ENCODE measurements at regions of chr3 and their contacts with region 1.

Region 1: DNA sequence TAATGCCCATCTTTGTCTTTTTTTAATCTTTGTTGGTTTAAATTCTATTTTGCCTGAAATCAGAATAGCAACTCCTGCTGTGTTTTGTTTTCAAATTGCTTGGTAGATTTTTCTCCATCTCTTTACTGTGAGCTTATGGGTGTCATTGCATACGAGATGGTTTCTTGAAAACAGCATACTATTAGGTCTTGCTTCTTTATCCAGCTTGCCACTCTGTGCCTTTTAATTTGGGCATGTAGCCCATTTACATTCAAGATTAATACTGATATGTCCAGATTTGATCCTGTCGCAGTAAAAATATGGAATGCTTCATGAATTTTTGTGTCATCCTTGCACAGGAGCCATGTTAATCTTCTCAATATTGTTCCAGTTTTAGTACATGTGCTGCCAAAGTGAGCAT is 316.6 kb downstream of the CGGBP1 start:
- DNase-seq: no peak
- H3K4me3 Mint-ChIP-seq: no peak overlapping the region
- H3K27ac Mint-ChIP-seq: no peak overlapping the region
- H3K4me1 Mint-ChIP-seq: peaks cover 31% of the 10 kb centered on the region
- H3K27me3 Mint-ChIP-seq: no peaks in the 10 kb centered on the region
- CTCF ChIP-seq: no peak

Region 2: DNA sequence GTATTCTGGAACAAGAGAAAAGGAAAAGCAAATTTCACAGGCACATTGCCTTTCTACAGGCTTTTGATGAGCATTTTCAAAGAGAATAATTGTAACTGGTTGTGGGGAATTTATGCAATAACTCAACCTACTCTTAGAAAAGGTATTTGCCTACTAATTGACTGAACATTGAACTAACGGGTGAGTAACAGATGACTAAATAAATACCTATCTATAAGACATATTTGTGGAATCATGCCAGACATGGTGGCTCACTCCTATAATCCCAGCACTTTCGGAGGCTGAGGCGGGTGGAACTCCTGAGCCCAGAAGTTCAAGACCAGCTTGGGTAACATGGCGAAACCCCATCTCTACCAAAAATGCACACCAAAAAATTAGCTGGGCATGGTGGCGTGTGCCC is 51.1 kb before region 1 on chr3:
- CTCF ChIA-PET with region 1: no interaction called
- intact Hi-C with region 1: no loop called
- DNase-seq: no peak
- H3K4me3 Mint-ChIP-seq: no peak overlapping the region
- H3K27ac Mint-ChIP-seq: no peak overlapping the region
- H3K4me1 Mint-ChIP-seq: no peaks in the 10 kb centered on the region
- H3K27me3 Mint-ChIP-seq: no peaks in the 10 kb centered on the region
- CTCF ChIP-seq: no peak

Region 3: DNA sequence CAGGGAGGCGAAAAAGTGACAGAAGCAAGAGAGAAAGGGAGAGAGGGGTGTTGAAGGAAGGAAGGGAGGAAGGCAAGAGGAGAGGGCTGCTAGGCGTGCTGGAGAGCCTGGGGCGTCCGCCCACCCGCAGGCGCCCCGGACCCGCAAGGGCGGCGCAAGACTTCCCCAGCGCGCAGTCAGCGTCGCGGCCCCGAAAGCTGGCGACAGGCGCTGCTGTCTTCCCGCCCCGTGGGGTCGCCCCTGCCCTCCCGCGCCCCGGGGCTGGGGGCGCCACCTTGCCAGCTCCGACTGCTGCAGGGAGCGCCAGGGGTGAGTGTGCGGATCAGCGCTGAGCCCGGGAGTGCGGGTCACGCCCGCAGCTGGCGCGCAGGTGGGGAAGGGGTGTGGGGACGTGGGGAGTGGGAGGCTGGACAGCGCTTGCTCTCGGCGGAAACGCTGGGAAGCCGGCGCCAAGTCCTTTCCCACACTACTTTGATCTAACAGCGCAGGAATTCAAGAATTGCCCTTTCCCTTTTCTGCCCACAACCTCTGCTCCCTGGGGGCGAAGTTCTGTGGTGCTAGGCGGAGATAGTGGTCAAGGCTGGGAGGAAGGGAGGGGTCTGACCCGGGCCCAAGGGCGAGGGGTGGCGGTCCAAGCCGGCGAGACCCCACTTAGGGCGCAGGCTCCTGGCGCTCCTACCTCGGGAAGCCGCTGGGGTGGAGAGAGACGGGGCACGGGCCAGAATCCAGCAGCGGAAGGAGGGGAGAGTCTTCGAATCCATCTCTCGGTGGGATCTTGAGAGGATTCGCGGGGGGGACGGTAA is 50.5 kb after region 1 on chr3:
- CTCF ChIA-PET with region 1: no interaction called
- intact Hi-C with region 1: loop called (anchors 5 kb)
- DNase-seq: peak; percentile 52
- H3K4me3 Mint-ChIP-seq: peak within 1 kb of the TSS; percentile 92
- H3K27ac Mint-ChIP-seq: peak within 1 kb of the TSS; percentile 92
- H3K4me1 Mint-ChIP-seq: peaks cover 21% of the 10 kb centered on the region
- H3K27me3 Mint-ChIP-seq: no peaks in the 10 kb centered on the region
- CTCF ChIP-seq: no peak